Uterus (tissue), 4 donors: ENCODE measurements at regions of chr13 and their contacts with region 1.

Region 1: GRCh38 chr13:31742097-31742734 is 2.9 kb downstream of the RXFP2 start:
- DNase-seq: peak; percentile 72 to 77
- H3K4me3 ChIP-seq: no peak overlapping the region
- H3K27ac ChIP-seq: no peak overlapping the region
- H3K4me1 ChIP-seq: no peaks in the 10 kb centered on the region
- H3K27me3 ChIP-seq: no peaks in the 10 kb centered on the region
- CTCF ChIP-seq: peak; percentile 82 to 97 (median 90)
- POLR2A ChIP-seq: no peak

Region 2: DNA sequence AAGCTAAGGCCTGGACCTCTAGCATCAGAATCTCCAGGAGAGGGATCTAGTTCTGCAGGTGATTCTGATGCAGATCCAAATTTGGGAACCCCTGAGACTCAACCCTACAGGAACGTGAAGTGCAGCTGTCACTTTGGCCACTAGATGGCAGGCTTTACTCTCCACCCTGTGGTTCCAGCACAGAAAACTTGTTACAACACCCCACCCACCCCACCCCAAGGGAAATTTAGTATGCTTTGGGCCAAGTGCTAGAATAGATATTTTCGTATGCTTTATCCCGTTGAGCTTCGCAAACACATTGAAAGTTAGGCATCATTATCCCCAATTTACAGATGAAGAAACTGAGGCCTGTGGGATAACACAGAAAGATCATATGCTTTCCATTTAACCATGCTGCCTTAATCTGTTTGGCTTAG is 310.5 kb before region 1 on chr13:
- intact Hi-C with region 1: loop called (anchors 10 kb)
- DNase-seq: peak; percentile 67
- H3K4me3 ChIP-seq: no peak overlapping the region
- H3K27ac ChIP-seq: no peak overlapping the region
- H3K4me1 ChIP-seq: no peaks in the 10 kb centered on the region
- H3K27me3 ChIP-seq: no peaks in the 10 kb centered on the region
- CTCF ChIP-seq: peak; percentile 56 to 88 (median 70)
- POLR2A ChIP-seq: no peak